CD8-positive, alpha-beta T cell (primary cell): ENCODE measurements at regions of chr14 and their contacts with region 1.

Region 1: DNA sequence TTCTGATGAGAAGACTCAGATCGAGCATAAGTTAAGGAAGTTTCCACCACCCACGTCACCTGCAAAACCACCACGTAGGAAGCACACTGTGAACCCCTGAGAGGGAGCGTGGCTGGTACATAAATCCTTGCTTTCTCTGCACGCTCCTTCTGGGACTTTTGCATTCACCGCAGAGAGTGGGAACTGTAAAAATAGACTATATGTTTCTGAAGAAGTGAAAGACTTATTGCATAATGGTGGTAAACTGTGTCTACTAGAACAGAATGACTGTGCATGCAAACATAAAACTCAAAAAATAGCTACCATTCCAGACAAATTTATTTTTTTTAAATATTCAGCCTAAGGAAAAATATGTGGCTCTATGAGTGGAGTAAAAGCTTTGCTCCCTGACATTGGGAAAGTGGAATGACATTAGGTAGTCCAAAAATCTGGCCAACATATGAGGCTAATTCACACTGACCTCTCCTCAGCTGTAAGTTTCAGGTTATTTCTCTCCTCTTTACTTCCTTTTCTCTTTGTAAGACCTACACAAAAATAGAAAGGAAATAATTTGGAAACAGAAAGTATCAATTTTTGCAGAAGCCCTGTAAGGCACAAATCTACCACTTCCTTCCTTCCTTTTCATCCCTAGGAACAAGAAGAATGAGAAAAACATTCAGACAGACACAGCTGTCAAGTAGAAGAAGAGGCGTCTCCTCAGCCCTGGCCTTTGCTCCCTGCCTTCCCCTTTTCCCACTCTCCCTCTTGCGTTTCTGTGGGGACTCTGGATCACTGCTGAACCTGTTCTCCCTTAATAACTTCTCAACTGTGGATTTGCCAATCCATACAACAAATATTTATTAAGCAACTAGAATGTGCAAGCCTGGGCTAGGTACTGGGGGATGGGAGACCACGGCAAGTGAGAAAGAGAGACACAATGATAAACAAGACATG is 264.3 kb upstream of the FOXN3 start:
- DNase-seq: peak in 6 of 9 experiments; percentile 21 to 64 (median 40)
- ATAC-seq: peak; percentile 69
- H3K4me3 ChIP-seq: peak overlapping the region; percentile 15 to 36
- H3K4me3 Mint-ChIP-seq: peak overlapping the region; percentile 73
- H3K27ac ChIP-seq: peak overlapping the region; percentile 12 to 57
- H3K27ac Mint-ChIP-seq: peak overlapping the region; percentile 89
- H3K4me1 ChIP-seq: peaks cover 34% of the 10 kb centered on the region
- H3K4me1 Mint-ChIP-seq: peaks cover 42% of the 10 kb centered on the region
- H3K27me3 ChIP-seq: no peaks in the 10 kb centered on the region
- H3K27me3 Mint-ChIP-seq: no peaks in the 10 kb centered on the region
- CTCF ChIP-seq: no peak

Region 2: GRCh38 chr14:89308232-89308959 is 373.0 kb before region 1 on chr14:
- CTCF ChIA-PET with region 1: no interaction called
- POLR2A ChIA-PET with region 1: no interaction called
- intact Hi-C with region 1: no loop called
- DNase-seq: no peak
- ATAC-seq: no peak
- H3K4me3 ChIP-seq: no peak overlapping the region
- H3K4me3 Mint-ChIP-seq: no peak overlapping the region
- H3K27ac ChIP-seq: no peak overlapping the region
- H3K27ac Mint-ChIP-seq: peak overlapping the region; percentile 47
- H3K4me1 ChIP-seq: peaks cover 27% of the 10 kb centered on the region
- H3K4me1 Mint-ChIP-seq: peaks cover 58% of the 10 kb centered on the region
- H3K27me3 ChIP-seq: no peaks in the 10 kb centered on the region
- H3K27me3 Mint-ChIP-seq: no peaks in the 10 kb centered on the region
- CTCF ChIP-seq: no peak

Region 3: GRCh38 chr14:89425931-89426330 is 255.4 kb before region 1 on chr14:
- CTCF ChIA-PET with region 1: no interaction called
- POLR2A ChIA-PET with region 1: no interaction called
- intact Hi-C with region 1: no loop called
- DNase-seq: peak in 3 of 9 experiments; percentile 8 to 39 (median 14)
- ATAC-seq: no peak
- H3K4me3 ChIP-seq: no peak overlapping the region
- H3K4me3 Mint-ChIP-seq: no peak overlapping the region
- H3K27ac ChIP-seq: no peak overlapping the region
- H3K27ac Mint-ChIP-seq: peak overlapping the region; percentile 56
- H3K4me1 ChIP-seq: peaks cover 32% of the 10 kb centered on the region
- H3K4me1 Mint-ChIP-seq: peaks cover 66% of the 10 kb centered on the region
- H3K27me3 ChIP-seq: no peaks in the 10 kb centered on the region
- H3K27me3 Mint-ChIP-seq: no peaks in the 10 kb centered on the region
- CTCF ChIP-seq: no peak

Region 4: DNA sequence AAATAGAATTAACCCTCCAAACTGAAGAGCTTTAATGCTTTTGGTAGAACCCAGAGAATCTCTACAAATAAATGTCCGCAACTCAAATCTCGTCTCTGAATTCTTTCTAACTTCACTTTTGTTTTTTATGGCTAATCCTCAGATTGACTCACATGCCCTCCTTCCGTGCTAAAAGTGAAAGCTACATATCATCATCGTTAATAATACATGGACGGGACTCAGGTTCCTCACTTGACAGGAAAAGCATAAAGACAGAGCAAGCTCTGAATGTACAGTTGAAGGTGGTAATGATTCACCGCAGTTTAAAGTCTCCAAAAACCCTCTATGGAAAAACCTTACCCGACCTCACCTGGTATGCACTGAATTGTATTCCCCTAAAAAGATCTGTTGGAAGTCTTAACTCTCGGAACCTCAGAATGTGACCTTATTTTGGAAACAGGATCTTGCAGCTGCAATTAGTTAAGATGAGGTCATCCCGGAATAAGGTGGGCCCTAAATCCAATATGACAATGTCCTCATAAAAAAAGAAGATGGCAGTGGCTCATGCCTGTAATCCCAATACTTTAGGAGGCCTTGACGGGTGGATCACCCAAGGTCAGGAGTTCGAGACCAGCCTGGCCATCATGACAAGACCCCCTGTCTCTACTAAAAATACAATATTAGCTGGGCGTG is 116.9 kb before region 1 on chr14:
- CTCF ChIA-PET with region 1: no interaction called
- POLR2A ChIA-PET with region 1: no interaction called
- intact Hi-C with region 1: no loop called
- DNase-seq: no peak
- ATAC-seq: no peak
- H3K4me3 ChIP-seq: no peak overlapping the region
- H3K4me3 Mint-ChIP-seq: no peak overlapping the region
- H3K27ac ChIP-seq: no peak overlapping the region
- H3K27ac Mint-ChIP-seq: peak overlapping the region; percentile 5
- H3K4me1 ChIP-seq: peaks cover 5% of the 10 kb centered on the region
- H3K4me1 Mint-ChIP-seq: peaks cover 74% of the 10 kb centered on the region
- H3K27me3 ChIP-seq: no peaks in the 10 kb centered on the region
- H3K27me3 Mint-ChIP-seq: no peaks in the 10 kb centered on the region
- CTCF ChIP-seq: no peak

Region 5: DNA sequence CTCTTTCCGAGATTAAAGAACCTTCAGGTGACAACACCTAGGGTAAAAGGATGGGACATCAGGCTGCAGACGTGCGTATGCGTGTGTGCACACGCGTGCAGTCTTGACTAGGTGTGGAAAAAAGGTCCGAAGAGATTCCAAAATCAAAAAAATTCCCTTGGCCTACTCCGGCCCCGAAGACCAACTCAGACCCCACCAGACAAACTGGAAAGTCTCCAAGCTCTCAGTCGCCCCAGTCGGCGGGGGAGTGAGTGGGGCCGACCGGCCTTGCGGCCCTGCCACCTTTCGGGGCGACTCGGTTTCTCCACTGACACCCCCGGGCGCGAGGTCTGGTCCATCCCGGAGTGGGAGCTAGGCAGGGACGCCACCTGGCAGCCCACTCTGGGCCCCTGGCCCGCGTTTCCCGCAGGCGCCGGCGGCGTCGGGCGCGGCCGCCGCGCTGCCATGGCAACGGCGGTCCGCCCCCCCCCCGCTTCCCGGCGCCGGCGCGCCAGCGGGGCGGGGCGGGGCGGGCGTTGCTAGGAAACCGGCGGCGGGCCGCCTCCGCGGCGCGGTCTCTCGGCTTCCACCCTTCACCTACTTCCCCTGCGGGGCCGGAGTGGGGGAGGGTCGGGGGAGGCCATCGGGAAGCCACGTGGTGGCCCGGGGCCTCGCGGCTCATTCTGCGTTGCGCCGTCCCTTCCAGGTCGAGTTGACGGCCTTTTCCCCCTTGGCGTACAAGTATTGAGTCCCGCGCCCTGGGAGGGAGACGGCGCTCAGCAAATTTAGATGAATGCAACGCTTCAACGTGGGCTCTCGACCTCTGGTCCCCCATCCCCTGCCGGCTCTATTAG is 20.1 kb after region 1 on chr14:
- CTCF ChIA-PET with region 1: interaction called, 3 read pairs
- POLR2A ChIA-PET with region 1: interaction called, 3 read pairs
- intact Hi-C with region 1: loop called in 1 of 2 experiments (anchors 2 kb)
- DNase-seq: peak; percentile 66 to 90 (median 82)
- ATAC-seq: peak; percentile 84
- H3K4me3 ChIP-seq: peak overlapping the region; percentile 56 to 69
- H3K4me3 Mint-ChIP-seq: peak overlapping the region; percentile 86
- H3K27ac ChIP-seq: peak overlapping the region; percentile 57 to 62
- H3K27ac Mint-ChIP-seq: peak overlapping the region; percentile 88
- H3K4me1 ChIP-seq: peaks cover 27% of the 10 kb centered on the region
- H3K4me1 Mint-ChIP-seq: peaks cover 53% of the 10 kb centered on the region
- H3K27me3 ChIP-seq: no peaks in the 10 kb centered on the region
- H3K27me3 Mint-ChIP-seq: no peaks in the 10 kb centered on the region
- CTCF ChIP-seq: no peak